Caco-2 (cell line): ENCODE measurements at regions of chr10 and their contacts with region 1.

Region 1: GRCh38 chr10:122298598-122299301 is 27.7 kb downstream of the BTBD16 start:
- DNase-seq: peak; percentile 70 to 75
- H3K4me3 ChIP-seq: 0 out of 2 replicates have a peak overlapping the region, but pooled peaks have one; percentile 18
- H3K4me3 Mint-ChIP-seq: no peak overlapping the region
- H3K27ac Mint-ChIP-seq: no peak overlapping the region
- H3K4me1 ChIP-seq: peaks cover 15% of the 10 kb centered on the region
- H3K4me1 Mint-ChIP-seq: peaks cover 11% of the 10 kb centered on the region
- H3K27me3 ChIP-seq: no peaks in the 10 kb centered on the region
- H3K27me3 Mint-ChIP-seq: no peaks in the 10 kb centered on the region
- CTCF ChIP-seq: peak; percentile 92 to 96

Region 2: DNA sequence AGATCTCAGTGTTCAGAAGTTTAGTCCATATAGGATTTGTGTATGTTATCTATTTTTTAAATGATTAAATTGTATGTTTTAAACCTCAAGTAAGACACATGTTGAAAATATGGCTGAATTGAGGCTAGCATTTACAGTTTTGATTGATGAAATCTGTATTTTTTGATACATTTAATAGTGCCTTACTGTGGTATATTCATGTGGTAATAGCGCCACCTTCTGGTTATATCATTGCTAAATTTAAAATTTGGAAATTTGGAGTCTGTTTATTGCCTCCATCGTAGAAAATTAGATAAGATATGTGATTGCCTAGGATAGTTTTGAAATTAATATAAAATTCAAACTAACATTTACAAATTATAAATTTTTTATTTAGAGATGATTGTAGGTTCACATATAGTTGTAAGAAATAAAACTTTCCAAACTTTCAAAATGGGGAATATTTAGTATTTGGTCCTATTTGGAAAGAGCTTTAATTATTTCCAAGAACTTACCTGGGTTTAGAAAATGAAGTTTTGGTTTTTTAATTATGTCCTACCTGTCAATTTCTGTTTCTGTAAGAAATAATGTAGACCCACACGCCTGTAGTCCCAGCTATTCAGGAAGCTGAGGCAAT is 136.6 kb after region 1 on chr10:
- CTCF ChIA-PET with region 1: interaction called, 46 read pairs
- POLR2A ChIA-PET with region 1: no interaction called
- intact Hi-C with region 1: loop called (anchors 1 kb)
- DNase-seq: peak in 1 of 2 experiments; percentile 49
- H3K4me3 ChIP-seq: no peak overlapping the region
- H3K4me3 Mint-ChIP-seq: no peak overlapping the region
- H3K27ac Mint-ChIP-seq: no peak overlapping the region
- H3K4me1 ChIP-seq: no peaks in the 10 kb centered on the region
- H3K4me1 Mint-ChIP-seq: no peaks in the 10 kb centered on the region
- H3K27me3 ChIP-seq: no peaks in the 10 kb centered on the region
- H3K27me3 Mint-ChIP-seq: no peaks in the 10 kb centered on the region
- CTCF ChIP-seq: peak; percentile 45 to 87

Region 3: GRCh38 chr10:122703439-122704118 is 404.8 kb after region 1 on chr10:
- CTCF ChIA-PET with region 1: no interaction called
- POLR2A ChIA-PET with region 1: no interaction called
- intact Hi-C with region 1: no loop called
- DNase-seq: peak; percentile 75 to 80
- H3K4me3 ChIP-seq: no peak overlapping the region
- H3K4me3 Mint-ChIP-seq: no peak overlapping the region
- H3K27ac Mint-ChIP-seq: no peak overlapping the region
- H3K4me1 ChIP-seq: no peaks in the 10 kb centered on the region
- H3K4me1 Mint-ChIP-seq: no peaks in the 10 kb centered on the region
- H3K27me3 ChIP-seq: no peaks in the 10 kb centered on the region
- H3K27me3 Mint-ChIP-seq: peaks cover 4% of the 10 kb centered on the region
- CTCF ChIP-seq: peak; percentile 88 to 95